ENCODE measurements at regions of chr17 and their contacts with region 1.

Region 1: DNA sequence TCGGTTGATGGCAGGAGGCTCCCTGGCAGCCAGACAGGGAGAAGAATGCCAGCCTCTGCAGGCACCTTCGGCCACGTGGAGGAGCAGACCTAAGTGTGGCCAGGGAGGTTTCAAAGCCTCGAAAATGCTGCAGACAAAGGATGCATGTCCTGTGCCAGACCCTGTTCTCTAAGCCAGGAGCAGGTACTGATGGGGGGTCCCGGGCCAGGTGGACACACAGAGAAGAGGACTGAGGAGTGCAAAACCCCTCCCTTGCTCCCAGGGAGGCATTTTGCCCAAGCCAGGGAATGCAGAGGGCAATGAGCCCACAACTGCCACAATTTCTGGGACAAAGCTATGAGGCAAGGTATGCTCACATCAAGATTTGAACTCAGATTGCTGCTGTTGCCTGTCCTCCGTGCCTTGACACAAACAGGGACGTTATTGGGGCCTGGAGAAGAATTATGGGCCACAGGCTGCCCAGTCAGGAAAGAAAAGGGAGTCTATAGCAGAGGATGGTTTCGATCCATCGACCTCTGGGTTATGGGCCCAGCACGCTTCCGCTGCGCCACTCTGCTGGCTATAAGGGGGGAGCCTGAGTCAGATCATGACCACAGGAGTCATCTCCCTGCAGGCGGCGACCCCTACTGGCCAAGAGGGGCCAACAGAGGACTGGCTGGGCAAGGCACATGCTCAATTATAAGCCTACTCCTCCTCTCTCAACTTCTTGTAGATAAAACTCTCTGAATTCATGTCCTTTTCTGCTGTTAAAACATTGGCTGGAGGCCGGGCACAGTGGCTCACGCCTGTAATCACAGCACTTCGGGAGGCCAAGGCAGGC is 25.1 kb upstream of the FOXK2 start:
- DNase-seq: peak; percentile 91
- H3K4me3 ChIP-seq: peak overlapping the region; percentile 38
- H3K27ac ChIP-seq: peak overlapping the region; percentile 54
- H3K4me1 ChIP-seq: peaks cover 68% of the 10 kb centered on the region
- CTCF ChIP-seq: peak; percentile 93

Region 2: DNA sequence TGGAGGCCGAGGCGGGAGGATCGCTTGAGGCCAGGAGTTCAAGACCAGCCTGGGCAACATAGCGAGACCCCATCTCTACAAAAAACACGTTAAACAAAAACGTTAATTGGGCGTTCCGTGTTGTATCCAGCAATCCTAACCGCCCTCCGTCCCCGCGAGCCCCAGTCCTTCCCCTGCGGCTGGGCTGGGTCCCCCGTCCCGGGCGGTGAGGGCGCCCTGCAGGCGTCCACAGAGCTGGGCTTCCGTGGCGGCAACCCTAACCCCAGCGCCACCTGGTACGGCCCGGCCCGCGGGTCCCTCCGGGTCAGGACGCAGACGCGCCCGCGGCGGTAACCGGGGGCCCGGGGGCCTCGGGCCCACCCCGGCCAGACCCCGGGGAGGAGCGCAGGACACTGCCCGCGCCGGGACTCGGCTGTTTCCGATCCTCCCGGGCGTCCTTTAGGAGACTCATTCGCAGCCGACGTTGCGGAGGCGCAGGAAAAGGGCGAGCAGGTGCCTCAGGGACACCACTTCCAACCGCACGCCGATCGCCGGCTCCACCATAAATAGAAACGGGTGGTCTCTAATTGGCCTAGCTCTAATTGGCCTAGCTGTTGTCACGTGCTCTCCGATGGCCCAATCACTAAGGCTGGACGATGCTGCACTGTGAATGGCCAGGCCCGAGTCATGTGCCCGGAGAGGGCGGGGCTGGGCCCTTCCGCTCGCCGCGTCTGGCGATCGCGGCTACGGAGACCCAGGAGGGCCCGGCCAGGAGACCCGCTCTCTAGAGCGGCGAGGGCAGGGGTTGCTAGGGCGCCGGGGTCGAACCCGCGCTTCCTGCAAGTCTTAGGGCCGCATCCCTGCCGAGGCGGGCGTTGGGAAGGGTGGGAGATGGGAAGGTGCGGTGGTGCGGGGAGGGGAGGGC is 201.9 kb before region 1 on chr17:
- CTCF ChIA-PET with region 1: no interaction called
- POLR2A ChIA-PET with region 1: no interaction called
- intact Hi-C with region 1: loop called (anchors 10 kb)
- DNase-seq: peak; percentile 100
- H3K4me3 ChIP-seq: peak overlapping the region; percentile 85
- H3K27ac ChIP-seq: peak overlapping the region; percentile 82
- H3K4me1 ChIP-seq: peaks cover 33% of the 10 kb centered on the region
- CTCF ChIP-seq: no peak; the same call in 1 of the 2 replicates

Region 3: DNA sequence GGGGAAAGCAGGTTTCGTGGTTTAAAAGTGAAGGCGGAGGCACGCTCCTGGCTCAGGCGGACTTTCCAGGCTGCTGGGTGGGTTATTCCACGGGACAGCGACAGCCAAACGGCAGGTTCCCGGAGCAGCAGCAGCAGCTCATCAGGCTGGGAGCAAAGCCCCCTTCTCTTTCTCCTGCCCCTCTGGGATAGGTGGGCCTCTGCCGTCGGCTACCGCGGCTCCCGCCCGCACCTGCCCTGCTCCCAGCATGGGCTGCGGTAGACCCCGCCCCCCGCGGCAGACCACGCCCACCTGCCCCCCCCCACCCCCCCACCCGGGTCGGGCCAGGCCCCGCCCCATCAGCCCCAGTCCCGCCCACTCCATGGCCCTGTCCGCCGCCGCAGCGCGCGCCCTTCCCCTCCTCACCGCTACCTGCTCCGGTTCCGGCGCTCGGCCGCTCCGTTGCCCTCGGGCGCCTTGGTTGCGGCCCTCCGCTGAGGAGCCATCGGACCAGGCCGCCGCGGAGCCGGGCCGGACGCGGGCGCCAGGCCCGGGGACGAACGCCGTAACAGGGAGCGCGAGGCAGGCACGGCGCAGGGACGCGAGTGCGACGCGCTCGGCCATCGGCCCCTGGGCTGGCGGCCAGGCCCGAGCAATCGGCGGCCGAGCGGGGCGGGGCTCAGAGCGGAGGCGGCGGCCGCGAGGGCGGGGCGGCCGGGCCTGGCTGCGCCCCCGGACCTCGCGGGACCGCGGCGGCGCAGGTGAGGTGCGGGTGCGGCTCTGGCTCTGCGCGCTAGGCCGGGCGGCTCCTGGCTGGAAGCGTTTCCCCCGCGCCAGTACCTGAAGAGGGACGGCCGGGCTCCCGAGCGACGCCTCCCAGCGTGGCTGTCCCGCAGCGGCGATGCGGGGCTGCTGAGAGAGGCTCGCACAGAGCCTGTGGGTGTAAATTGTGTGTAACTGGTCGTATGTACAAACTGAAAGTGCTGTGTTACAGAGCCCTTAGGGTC is 76.2 kb before region 1 on chr17 and contains the starts of genes HEXD and OGFOD3:
- CTCF ChIA-PET with region 1: no interaction called
- POLR2A ChIA-PET with region 1: interaction called, 3 read pairs
- intact Hi-C with region 1: loop called (anchors 2 kb)
- DNase-seq: peak; percentile 96
- H3K4me3 ChIP-seq: peak within 1 kb of the TSS; percentile 84
- H3K27ac ChIP-seq: peak within 1 kb of the TSS; percentile 66
- H3K4me1 ChIP-seq: peaks cover 20% of the 10 kb centered on the region
- CTCF ChIP-seq: no peak
- total RNA-seq, gene HEXD: 88.8 and 93.2 TPM in 2 replicates
- total RNA-seq, gene OGFOD3: 46.9 and 55.6 TPM in 2 replicates

Region 4: GRCh38 chr17:82450170-82451106 is 44.0 kb before region 1 on chr17 and contains the start of gene CYBC1:
- CTCF ChIA-PET with region 1: no interaction called
- POLR2A ChIA-PET with region 1: interaction called, 3 read pairs
- intact Hi-C with region 1: loop called (anchors 1 kb)
- DNase-seq: peak; percentile 99
- H3K4me3 ChIP-seq: peak within 1 kb of the TSS; percentile 80
- H3K27ac ChIP-seq: peak within 1 kb of the TSS; percentile 98
- H3K4me1 ChIP-seq: peaks cover 40% of the 10 kb centered on the region
- CTCF ChIP-seq: no peak
- total RNA-seq, gene CYBC1: 424 and 470 TPM in 2 replicates

Region 5: DNA sequence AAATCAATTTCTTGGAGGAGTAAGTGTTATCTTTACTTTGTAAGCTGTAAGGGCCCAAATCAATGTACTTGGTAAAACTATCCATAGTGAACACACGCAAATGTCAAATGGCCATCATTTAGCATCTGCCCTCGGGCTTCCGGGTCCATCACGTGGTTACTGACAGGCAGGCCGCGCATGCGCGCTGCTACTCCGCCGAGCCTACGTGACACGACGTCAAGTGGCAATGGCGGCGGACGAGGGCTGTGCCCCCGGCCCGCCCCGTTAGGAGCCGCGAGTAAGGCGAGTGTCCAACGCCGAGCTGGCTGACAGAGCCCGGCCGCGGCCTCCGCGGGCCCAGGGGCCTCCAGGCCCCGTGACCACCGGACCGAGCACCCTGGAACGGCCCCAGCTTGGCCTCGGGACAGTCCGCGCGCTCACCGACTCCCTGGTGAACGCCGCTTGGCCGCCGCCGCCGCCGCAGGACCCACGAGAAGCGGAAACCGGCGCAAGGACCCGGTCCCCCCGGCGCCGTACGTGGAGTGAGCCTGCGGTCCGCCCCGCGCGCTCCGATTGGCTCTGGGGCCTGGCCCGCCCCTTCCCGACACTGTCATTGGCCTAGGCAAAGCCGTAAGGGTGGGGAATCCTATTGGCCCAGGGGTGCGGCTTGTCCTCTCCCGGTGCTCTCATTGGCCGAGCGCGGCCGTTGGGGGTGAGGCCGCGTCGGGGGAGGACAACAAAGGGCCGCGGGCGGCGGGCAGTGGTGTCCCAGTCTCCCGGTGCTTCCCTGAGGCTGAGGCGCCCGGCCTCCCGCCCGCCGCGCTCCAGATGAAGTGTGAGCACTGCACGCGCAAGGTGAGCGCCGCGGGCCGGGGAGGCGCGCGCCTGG is 36.2 kb before region 1 on chr17 and contains the start of gene NARF:
- CTCF ChIA-PET with region 1: interaction called, 6 read pairs
- POLR2A ChIA-PET with region 1: no interaction called
- intact Hi-C with region 1: loop called (anchors 2 kb)
- DNase-seq: peak; percentile 100
- H3K4me3 ChIP-seq: peak within 1 kb of the TSS; percentile 75
- H3K27ac ChIP-seq: peak within 1 kb of the TSS; percentile 89
- H3K4me1 ChIP-seq: peaks cover 18% of the 10 kb centered on the region
- CTCF ChIP-seq: no peak
- total RNA-seq, gene NARF: 75.0 and 82.5 TPM in 2 replicates

Region 6: DNA sequence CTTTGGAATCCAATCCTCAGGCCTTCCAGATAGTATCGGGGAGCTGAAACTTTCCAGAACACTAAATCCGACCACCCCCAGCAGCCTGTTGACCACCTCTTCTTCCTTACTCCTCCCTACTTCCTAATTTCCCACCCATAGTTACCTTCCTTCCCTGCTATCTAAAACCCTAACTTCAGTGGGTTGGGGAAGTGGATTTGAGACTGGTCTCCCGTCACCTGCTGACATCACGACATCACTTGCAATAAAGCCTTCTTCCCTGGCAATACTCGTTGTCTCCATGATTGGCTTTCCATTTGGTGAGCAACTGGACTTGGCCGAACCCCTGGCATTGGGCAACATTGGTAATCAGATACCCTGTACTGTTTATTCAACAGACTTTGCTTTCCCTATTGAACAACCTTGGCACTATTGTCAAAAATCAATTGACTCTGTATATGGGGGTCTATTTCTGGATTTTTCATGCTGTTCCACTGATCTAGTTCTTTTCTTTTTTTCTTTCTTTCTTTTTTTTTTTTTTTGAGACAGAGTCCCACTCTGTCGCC is 13.3 kb after region 1 on chr17:
- CTCF ChIA-PET with region 1: interaction called, 4 read pairs
- POLR2A ChIA-PET with region 1: interaction called, 10 read pairs
- intact Hi-C with region 1: loop called (anchors 1 kb)
- DNase-seq: no peak
- H3K4me3 ChIP-seq: no peak overlapping the region
- H3K27ac ChIP-seq: peak overlapping the region; percentile 81
- H3K4me1 ChIP-seq: peaks cover 43% of the 10 kb centered on the region
- CTCF ChIP-seq: no peak

Region 7: GRCh38 chr17:82518826-82519810 is 24.7 kb after region 1 on chr17 and contains the start of gene FOXK2:
- CTCF ChIA-PET with region 1: interaction called, 6 read pairs
- POLR2A ChIA-PET with region 1: interaction called, 5 read pairs
- intact Hi-C with region 1: loop called (anchors 1 kb)
- DNase-seq: peak; percentile 99
- H3K4me3 ChIP-seq: peak within 1 kb of the TSS; percentile 84
- H3K27ac ChIP-seq: peak within 1 kb of the TSS; percentile 67
- H3K4me1 ChIP-seq: peaks cover 39% of the 10 kb centered on the region
- CTCF ChIP-seq: no peak
- total RNA-seq, gene FOXK2: 62.4 and 76.2 TPM in 2 replicates

Region 8: GRCh38 chr17:82924798-82925197 is 430.4 kb after region 1 on chr17:
- CTCF ChIA-PET with region 1: no interaction called
- POLR2A ChIA-PET with region 1: no interaction called
- intact Hi-C with region 1: no loop called
- DNase-seq: no peak
- H3K4me3 ChIP-seq: no peak overlapping the region
- H3K27ac ChIP-seq: peak overlapping the region; percentile 66
- H3K4me1 ChIP-seq: peaks cover 23% of the 10 kb centered on the region
- CTCF ChIP-seq: 0 out of 2 replicates have a peak, but pooled peaks have one; percentile 19

Measured in OCI-LY7 (cell line).